ENCODE measurements at regions of chr16 and their contacts with region 1.

Region 1: GRCh38 chr16:25176081-25176480 is 40.7 kb upstream of the AQP8 start:
- DNase-seq: no peak
- ATAC-seq: no peak
- H3K4me3 ChIP-seq: no peak overlapping the region
- H3K27ac ChIP-seq: no peak overlapping the region
- H3K4me1 ChIP-seq: no peaks in the 10 kb centered on the region
- H3K27me3 ChIP-seq: no peaks in the 10 kb centered on the region
- CTCF ChIP-seq: no peak

Region 2: DNA sequence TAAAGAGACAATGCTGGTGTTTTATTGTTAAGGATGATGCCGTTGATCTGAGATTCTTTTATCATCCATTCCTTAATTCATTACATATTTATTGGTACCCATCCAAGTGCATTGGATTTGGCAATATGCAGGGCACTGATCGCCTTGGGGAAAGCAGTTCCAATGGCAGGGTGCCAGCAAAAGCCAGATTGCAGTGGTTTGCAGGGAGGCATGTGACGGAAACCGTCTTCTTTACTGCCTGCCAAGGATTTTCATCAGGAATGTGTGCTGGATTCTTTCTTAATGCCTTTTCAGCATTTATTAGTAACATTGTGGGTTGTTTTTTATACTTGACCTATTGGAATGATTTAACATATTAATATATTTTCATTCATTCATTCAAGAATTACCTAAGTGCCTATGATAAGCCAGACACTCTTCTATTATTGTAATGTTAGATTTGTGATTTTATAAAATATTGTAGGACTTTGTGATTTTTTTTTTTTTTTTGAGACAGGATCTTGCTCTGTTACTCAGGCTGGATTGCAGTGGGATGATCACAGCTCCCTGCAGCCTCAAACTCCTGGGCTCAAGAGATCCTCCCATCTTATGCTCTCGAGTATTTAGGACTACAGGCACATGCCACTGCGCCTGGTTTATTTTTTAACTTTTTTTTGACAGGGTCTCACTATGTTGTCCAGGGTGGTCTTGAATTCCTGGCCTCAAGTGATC is 540.0 kb before region 1 on chr16:
- CTCF ChIA-PET with region 1: no interaction called
- POLR2A ChIA-PET with region 1: interaction called, 11 read pairs
- in situ Hi-C with region 1: no loop called
- intact Hi-C with region 1: no loop called
- DNase-seq: peak; percentile 32
- ATAC-seq: peak; percentile 87
- H3K4me3 ChIP-seq: no peak overlapping the region
- H3K27ac ChIP-seq: peak overlapping the region; percentile 73
- H3K4me1 ChIP-seq: peaks cover 13% of the 10 kb centered on the region
- H3K27me3 ChIP-seq: no peaks in the 10 kb centered on the region
- CTCF ChIP-seq: no peak

Region 3: DNA sequence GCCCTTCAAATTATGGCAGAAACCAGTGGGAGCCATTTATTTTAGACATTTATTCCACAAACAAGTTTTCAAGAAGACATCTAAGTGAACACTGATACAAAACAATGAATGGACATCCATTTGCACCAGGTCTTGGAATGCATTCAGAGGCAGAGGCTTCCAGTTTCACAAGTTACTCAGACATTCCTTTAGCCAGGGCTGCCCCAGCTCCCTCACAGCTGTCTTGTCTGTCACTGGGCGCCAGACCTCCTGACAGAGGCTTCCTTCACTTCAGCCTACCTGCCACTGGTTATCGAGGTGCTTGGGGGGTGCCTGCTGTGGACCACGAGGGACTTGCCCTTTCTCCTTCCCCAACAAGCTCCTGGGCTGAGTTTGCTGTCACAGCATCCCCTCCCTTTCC is 59.9 kb after region 1 on chr16:
- CTCF ChIA-PET with region 1: interaction called, 10 read pairs
- POLR2A ChIA-PET with region 1: no interaction called
- in situ Hi-C with region 1: no loop called
- intact Hi-C with region 1: no loop called
- DNase-seq: no peak
- ATAC-seq: no peak
- H3K4me3 ChIP-seq: no peak overlapping the region
- H3K27ac ChIP-seq: no peak overlapping the region
- H3K4me1 ChIP-seq: no peaks in the 10 kb centered on the region
- H3K27me3 ChIP-seq: no peaks in the 10 kb centered on the region
- CTCF ChIP-seq: no peak